Naive thymus-derived CD8-positive, alpha-beta T cell (primary cell): ENCODE measurements at regions of chr3 and their contacts with region 1.

Region 1: GRCh38 chr3:50611464-50612233 is at the start of gene CISH:
- DNase-seq: peak; percentile 78 to 95 (median 90)
- ATAC-seq: peak; percentile 69 to 70
- H3K4me3 Mint-ChIP-seq: peak within 1 kb of the TSS; percentile 92 to 98 (median 94)
- H3K27ac Mint-ChIP-seq: peak within 1 kb of the TSS; percentile 91 to 98 (median 94)
- H3K4me1 Mint-ChIP-seq: peaks cover 43 to 83% (median 76%) of the 10 kb centered on the region in 4 donors
- H3K27me3 Mint-ChIP-seq: no peaks in the 10 kb centered on the region
- polyA plus RNA-seq, gene CISH: 16.3 to 135 (median 100) TPM

Region 2: DNA sequence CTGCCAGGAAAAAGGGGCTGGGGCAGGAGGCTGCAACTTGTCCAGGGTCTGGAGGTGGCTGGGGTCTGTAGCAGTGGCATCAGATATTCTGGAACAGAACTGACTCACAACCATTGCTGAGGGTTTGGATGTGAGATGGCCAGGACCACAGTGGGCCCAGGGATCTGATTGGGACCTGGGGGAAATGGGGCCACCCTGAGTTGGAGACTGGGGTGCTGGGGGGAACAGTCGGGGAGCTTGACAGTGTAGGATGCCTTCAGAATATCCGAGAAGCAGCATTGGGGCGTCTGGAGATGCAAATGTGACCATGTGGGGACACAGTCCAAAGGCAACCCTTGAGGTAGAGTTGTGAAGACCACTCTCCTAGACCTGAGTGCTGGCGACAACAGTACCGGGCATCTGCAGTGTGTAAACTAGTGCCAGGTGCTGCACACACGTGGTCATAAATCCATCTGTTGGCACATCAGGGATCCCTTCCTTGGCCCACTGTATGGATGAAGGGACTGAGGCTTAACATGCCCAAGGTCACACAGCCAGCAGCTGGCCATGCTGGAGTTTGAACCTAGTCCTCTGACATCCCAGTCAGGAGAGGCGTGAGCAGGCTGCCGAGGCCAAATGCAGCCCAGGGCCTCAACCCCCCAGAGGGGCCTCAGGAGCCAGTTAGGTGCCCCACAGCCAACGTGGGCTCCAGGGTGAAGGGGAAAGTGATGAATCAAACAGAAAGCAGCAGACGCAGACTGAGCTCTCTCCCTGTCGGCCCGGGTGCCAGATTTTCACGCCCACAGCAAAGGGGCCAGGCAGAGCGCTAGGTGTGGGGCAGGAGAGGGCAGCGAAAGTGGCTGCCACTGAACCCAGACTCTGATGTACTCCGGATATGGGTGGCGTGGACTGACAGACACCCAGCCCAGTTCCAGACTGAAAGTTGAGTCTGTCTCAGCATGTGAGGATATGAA is 23.6 kb before region 1 on chr3:
- POLR2A ChIA-PET with region 1: interaction called, 623 read pairs
- DNase-seq: peak in 4 of 10 donors; percentile 29 to 61 (median 38)
- ATAC-seq: peak; percentile 32 to 38
- H3K4me3 Mint-ChIP-seq: peak overlapping the region; percentile 9 to 72 (median 46)
- H3K27ac Mint-ChIP-seq: peak overlapping the region; percentile 84 to 95 (median 90)
- H3K4me1 Mint-ChIP-seq: peaks cover 34 to 77% (median 62%) of the 10 kb centered on the region in 4 donors
- H3K27me3 Mint-ChIP-seq: no peaks in the 10 kb centered on the region

Region 3: DNA sequence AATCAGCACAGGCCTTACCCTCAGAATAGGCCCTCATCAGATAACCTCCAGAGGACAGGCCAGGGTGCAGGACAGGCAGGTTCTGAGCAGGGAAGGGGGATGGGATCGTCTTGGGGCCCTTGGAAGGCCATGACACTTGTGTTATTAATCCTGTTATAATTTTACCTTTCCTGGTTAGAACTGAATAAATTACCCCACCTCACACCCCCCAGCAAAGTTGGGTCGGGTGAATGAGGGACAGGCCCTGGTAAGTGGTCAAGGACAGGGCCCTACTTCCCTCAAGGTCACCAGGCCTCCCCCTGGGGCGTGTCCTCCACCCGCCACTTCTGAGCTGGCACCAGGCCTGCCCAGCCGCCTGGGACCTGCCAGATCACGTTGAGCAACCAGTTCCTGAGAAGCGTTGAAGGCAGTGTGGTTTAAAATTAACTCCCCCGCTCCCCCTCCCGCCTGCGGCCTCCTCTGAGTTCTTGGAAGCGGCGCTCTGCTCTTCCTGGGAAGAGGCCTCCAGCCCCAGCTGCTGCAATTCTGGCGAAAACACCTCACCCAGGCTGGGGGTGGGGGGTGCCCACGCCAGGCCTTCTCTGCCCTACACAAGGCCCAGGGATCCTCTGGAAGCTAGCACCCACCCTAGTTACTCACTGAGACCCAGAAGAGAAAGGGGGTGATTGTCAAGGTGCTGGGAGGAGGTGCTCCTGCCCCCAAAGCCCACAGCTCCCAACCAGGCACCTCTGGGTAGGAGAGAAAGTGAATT is 10.6 kb before region 1 on chr3:
- POLR2A ChIA-PET with region 1: interaction called, 104 read pairs
- DNase-seq: peak; percentile 31 to 76 (median 56)
- ATAC-seq: peak; percentile 69 to 83
- H3K4me3 Mint-ChIP-seq: peak overlapping the region; percentile 62 to 92 (median 82)
- H3K27ac Mint-ChIP-seq: peak overlapping the region; percentile 88 to 99 (median 94)
- H3K4me1 Mint-ChIP-seq: peaks cover 50 to 81% (median 77%) of the 10 kb centered on the region in 4 donors
- H3K27me3 Mint-ChIP-seq: no peaks in the 10 kb centered on the region

Region 4: DNA sequence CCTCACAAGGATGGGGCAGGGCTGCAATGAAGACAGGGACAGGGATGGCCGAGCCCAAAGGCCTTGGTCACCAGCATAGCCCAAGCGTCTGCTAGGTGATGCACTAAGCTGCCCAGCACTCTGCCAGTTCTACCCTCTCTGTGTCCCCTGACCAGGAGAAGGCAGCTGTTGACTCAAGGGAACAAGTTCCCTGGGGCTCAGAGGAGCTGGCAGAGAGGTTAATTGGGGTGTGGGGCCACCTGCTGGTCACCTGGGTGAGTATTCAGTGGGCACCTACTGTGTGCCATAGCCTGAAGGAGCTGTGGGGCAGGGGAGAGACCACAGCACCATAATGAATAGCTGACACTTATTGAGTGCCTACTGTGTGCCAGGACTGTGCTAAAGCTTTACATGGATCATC is 41.1 kb after region 1 on chr3:
- POLR2A ChIA-PET with region 1: interaction called, 18 read pairs
- DNase-seq: peak in 9 of 10 donors; percentile 17 to 75 (median 41)
- ATAC-seq: peak; percentile 58 to 87
- H3K4me3 Mint-ChIP-seq: no peak overlapping the region
- H3K27ac Mint-ChIP-seq: peak overlapping the region in 7 of 10 donors; percentile 13 to 83 (median 35)
- H3K4me1 Mint-ChIP-seq: peaks cover 0 to 13% (median 11%) of the 10 kb centered on the region in 4 donors
- H3K27me3 Mint-ChIP-seq: no peaks in the 10 kb centered on the region

Region 5: GRCh38 chr3:50674349-50675178 is 62.9 kb after region 1 on chr3 and contains the start of gene DOCK3:
- POLR2A ChIA-PET with region 1: no interaction called
- DNase-seq: peak; percentile 43 to 74 (median 64)
- ATAC-seq: peak; percentile 89 to 95
- H3K4me3 Mint-ChIP-seq: peak within 1 kb of the TSS; percentile 64 to 89 (median 80)
- H3K27ac Mint-ChIP-seq: peak within 1 kb of the TSS in 7 of 10 donors; percentile 3 to 78 (median 26)
- H3K4me1 Mint-ChIP-seq: peaks cover 3 to 10% (median 8%) of the 10 kb centered on the region in 4 donors
- H3K27me3 Mint-ChIP-seq: peaks cover 3 to 35% (median 9%) of the 10 kb centered on the region in 5 donors
- polyA plus RNA-seq, gene DOCK3: 0.14 to 0.63 (median 0.22) TPM